Sigmoid colon (tissue), 7 donors: ENCODE measurements at regions of chr19 and their contacts with region 1.

Region 1: GRCh38 chr19:43532962-43533545 is at the start of gene ZNF575:
- DNase-seq: peak; percentile 94
- H3K4me3 ChIP-seq: peak within 1 kb of the TSS; percentile 37 to 66 (median 56)
- H3K27ac ChIP-seq: peak within 1 kb of the TSS; percentile 93 to 98 (median 96)
- H3K4me1 ChIP-seq: peaks cover 0 to 38% (median 32%) of the 10 kb centered on the region in 4 donors
- H3K27me3 ChIP-seq: no peaks in the 10 kb centered on the region
- CTCF ChIP-seq: no peak
- EP300 ChIP-seq: no peak
- POLR2A ChIP-seq: no peak
- total RNA-seq, gene ZNF575: 0.14 TPM in 1 of 4 donors, not detected in the others

Region 2: DNA sequence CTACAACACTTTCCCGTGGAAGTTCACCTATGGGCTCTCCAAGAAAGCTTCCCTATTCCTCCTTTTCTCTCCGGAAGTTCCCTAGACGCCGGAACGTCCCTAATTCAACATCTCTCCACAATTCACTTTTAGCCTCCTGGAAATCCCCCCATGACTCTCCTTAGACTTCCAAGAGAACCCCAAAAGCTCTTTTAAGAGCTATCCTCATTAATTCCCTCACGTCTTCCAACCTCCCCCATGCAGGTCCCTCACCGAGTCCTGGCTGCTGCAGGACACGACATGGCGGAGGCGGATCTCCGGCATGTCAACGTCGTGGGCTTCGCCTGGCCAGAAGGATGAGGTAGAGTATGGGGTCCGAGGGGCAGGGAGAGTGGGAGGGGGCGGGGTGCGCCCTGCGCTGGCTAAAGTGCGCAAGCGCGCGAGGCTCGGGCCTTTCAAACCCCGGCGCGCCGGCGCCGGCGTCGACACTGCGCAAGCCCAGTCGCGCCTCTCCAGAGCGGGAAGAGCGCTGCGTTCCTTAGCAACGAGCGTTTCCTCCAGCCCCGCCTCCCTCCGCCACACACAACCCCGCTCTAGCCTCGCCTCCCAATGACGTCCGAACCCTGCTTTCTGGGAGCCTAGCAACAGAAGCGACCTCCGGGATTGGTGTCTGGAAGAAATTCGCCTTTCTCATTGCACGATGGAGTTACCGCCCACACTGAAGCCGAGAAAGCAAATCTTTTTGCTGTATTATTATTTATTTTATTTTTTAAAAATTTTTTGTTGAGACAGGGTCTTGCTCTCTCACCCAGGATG is 42.3 kb after region 1 on chr19 and contains the starts of genes PINLYP and XRCC1:
- intact Hi-C with region 1: loop called (anchors 5 kb)
- DNase-seq: peak; percentile 99
- H3K4me3 ChIP-seq: peak within 1 kb of the TSS; percentile 58 to 79 (median 76)
- H3K27ac ChIP-seq: peak within 1 kb of the TSS; percentile 86 to 88 (median 86)
- H3K4me1 ChIP-seq: peaks cover 0 to 23% (median 20%) of the 10 kb centered on the region in 4 donors
- H3K27me3 ChIP-seq: no peaks in the 10 kb centered on the region
- CTCF ChIP-seq: no peak
- EP300 ChIP-seq: peak in 1 of 4 donors; percentile 26
- POLR2A ChIP-seq: peak in 1 of 2 donors; percentile 37
- total RNA-seq, gene PINLYP: 6.6 to 21.0 (median 13.3) TPM
- total RNA-seq, gene XRCC1: 15.1 to 31.8 (median 24.0) TPM

Region 3: DNA sequence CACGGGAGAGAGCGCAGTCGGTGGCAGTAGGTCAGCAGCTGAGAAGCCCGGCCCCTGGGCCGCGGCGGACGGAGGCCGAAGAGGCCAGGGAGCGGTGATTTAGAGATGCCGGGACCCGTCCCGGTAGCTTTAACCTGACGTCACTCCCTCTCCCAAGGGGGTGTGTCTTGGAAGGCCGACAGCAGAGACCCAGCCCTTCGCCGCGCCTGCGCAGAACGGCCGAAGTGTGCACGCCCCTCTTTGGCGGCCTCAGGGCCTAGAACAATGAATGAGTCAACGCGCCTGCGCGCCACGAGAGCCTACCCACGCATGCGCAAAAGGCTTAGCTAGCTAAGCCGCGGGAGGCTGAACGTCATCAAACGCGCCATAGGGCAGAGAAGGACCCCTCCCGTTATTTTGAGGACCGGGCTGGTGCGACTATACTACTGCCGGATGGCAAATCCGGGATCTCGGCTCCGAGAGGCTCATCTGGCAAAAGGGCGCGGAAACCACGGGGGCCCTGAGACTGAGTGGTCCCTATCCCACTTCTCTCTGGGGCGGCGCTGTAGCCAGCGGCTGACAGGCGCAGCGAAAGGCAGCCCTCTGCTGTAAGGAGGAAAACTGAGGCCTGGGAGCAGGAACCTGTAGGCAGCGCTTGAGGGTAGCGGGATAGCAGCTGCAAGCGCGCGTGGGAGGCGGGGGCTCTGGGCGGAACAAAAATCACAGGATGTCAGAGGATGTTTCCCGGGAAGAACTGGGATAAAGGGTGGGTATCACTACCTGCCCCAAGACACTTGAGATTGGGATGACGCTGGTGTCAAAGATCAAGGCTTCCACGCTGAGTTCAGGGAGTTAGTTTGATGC is 63.2 kb after region 1 on chr19 and contains the starts of genes IRGQ and ZNF576:
- intact Hi-C with region 1: loop called (anchors 1 kb)
- DNase-seq: peak; percentile 100
- H3K4me3 ChIP-seq: peak within 1 kb of the TSS; percentile 57 to 73 (median 70)
- H3K27ac ChIP-seq: peak within 1 kb of the TSS; percentile 90 to 99 (median 95)
- H3K4me1 ChIP-seq: peaks cover 0 to 46% (median 37%) of the 10 kb centered on the region in 4 donors
- H3K27me3 ChIP-seq: no peaks in the 10 kb centered on the region
- CTCF ChIP-seq: no peak
- EP300 ChIP-seq: peak in 2 of 4 donors; percentile 16 to 88
- POLR2A ChIP-seq: peak; percentile 17 to 87
- total RNA-seq, gene IRGQ: 13.5 to 24.4 (median 18.8) TPM
- total RNA-seq, gene ZNF576: 12.1 to 23.3 (median 14.8) TPM

Region 4: GRCh38 chr19:43651758-43652545 is 118.9 kb after region 1 on chr19:
- intact Hi-C with region 1: loop called (anchors 2 kb)
- DNase-seq: peak; percentile 80
- H3K4me3 ChIP-seq: peak overlapping the region in 1 of 4 donors; percentile 6
- H3K27ac ChIP-seq: peak overlapping the region in 3 of 4 donors; percentile 4 to 51 (median 43)
- H3K4me1 ChIP-seq: peaks cover 0 to 7% (median 0%) of the 10 kb centered on the region in 4 donors
- H3K27me3 ChIP-seq: no peaks in the 10 kb centered on the region
- CTCF ChIP-seq: peak; percentile 72 to 79 (median 74)
- EP300 ChIP-seq: no peak
- POLR2A ChIP-seq: no peak

Region 5: GRCh38 chr19:43668406-43669158 is 135.5 kb after region 1 on chr19:
- intact Hi-C with region 1: loop called (anchors 5 kb)
- DNase-seq: peak; percentile 100
- H3K4me3 ChIP-seq: peak overlapping the region; percentile 36 to 62 (median 56)
- H3K27ac ChIP-seq: peak overlapping the region; percentile 90 to 98 (median 92)
- H3K4me1 ChIP-seq: peaks cover 0 to 25% (median 20%) of the 10 kb centered on the region in 4 donors
- H3K27me3 ChIP-seq: no peaks in the 10 kb centered on the region
- CTCF ChIP-seq: no peak
- EP300 ChIP-seq: peak in 1 of 4 donors; percentile 25
- POLR2A ChIP-seq: peak; percentile 88 to 90